Heart right ventricle (tissue), 16 donors: ENCODE measurements at regions of chr2 and their contacts with region 1.

Region 1: GRCh38 chr2:96662360-96662759 is 19.8 kb downstream of the FER1L5 start:
- DNase-seq: no peak
- ATAC-seq: no peak
- H3K4me3 ChIP-seq: no peak overlapping the region
- H3K27ac ChIP-seq: no peak overlapping the region
- H3K4me1 ChIP-seq: peaks cover 0 to 14% (median 8%) of the 10 kb centered on the region in 9 donors
- H3K27me3 ChIP-seq: no peaks in the 10 kb centered on the region
- CTCF ChIP-seq: no peak

Region 2: DNA sequence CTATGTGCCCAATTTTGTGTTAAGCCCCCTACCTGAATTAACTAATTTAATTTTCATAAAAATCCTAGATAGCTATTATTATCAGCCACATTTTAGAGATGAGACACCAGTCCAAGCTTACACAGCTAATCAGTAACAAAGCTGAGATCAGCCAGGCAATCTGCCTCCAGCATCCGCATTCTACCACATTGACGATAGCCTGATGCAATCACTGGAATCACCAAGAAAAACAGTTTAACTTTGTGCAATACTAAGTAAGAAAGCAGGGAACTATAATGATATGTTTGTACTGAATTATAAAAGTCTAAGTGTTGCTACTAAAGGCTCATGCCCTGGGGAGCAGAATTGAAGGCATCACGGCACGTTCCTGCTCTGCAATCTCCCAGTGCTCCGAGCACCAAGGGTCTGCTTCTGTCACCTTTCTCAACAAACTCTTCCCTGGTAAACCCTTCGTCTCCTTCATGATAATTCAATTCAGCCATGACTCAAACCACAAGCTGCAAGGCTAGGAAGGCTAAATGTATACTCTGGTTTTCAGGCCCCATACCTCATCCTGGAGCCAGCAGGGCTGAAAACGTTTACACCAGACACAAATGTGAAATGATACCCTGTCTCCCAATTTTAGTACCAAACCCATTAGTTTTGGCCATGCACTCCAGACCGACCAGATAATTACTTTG is 43.6 kb before region 1 on chr2:
- intact Hi-C with region 1: loop called in 1 of 10 experiments (anchors 1 kb)
- DNase-seq: no peak
- ATAC-seq: peak in 2 of 8 donors; percentile 23 to 36
- H3K4me3 ChIP-seq: no peak overlapping the region
- H3K27ac ChIP-seq: peak overlapping the region in 1 of 10 donors; percentile 86
- H3K4me1 ChIP-seq: peaks cover 0 to 46% (median 12%) of the 10 kb centered on the region in 9 donors
- H3K27me3 ChIP-seq: no peaks in the 10 kb centered on the region
- CTCF ChIP-seq: no peak